ENCODE measurements at regions of chr7 and their contacts with region 1.

Region 1: GRCh38 chr7:78207269-78207668 is 408.7 kb downstream of the PHTF2 start:
- DNase-seq: no peak

Region 2: GRCh38 chr7:77368974-77369373 is 838.3 kb before region 1 on chr7:
- intact Hi-C with region 1: no loop called
- DNase-seq: no peak

Region 3: GRCh38 chr7:78260826-78261225 is 53.6 kb after region 1 on chr7:
- intact Hi-C with region 1: no loop called
- DNase-seq: no peak

Region 4: GRCh38 chr7:79622781-79623180 is 1415.5 kb after region 1 on chr7:
- intact Hi-C with region 1: loop called in 1 of 2 experiments (anchors 5 kb)
- DNase-seq: no peak

Measured in posterior vena cava (tissue), 2 donors.